Mammary epithelial cell (primary cell): ENCODE measurements at regions of chr16 and their contacts with region 1.

Region 1: DNA sequence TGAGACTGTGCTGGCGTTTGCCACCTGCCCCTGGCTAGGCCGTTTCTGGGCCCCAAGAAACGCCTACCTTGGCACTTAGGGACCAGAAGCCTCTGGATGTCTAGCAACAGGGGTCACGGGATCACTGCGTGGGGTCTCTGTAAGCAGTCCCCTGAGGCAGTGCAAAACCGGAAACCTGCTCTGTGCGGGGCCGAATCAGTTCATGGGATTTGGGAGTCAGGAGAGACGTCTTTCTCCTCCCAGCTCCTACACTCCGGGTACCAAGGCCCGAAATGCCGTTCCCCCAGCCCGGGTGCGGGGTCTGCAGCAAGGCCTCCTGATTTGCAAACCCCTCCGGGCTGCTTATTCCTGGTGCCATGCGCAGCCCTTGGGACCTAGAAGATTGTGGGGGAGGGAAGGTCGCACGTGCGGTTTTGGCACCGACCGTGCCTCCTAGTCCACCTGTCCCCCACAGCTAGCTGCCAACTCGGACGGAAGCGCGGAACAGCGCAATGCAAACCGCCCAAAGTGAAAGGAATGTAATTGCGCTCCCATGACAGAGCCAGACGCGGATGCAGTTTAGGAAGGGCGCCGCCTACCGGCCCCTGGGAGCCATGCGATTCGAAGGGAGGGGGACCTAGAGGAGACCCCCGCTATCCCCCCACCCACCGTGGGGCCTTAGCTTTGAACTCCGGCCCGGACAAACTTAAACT is 6.5 kb downstream of the IRX5 start:
- DNase-seq: peak; percentile 82
- H3K4me3 ChIP-seq: peak overlapping the region; percentile 64 to 95 (median 72)
- H3K27ac ChIP-seq: peak overlapping the region; percentile 90
- H3K4me1 ChIP-seq: peaks cover 29% of the 10 kb centered on the region
- H3K27me3 ChIP-seq: no peaks in the 10 kb centered on the region
- CTCF ChIP-seq: peak; percentile 79 to 88

Region 2: GRCh38 chr16:53892155-53892554 is 1045.0 kb before region 1 on chr16:
- CTCF ChIA-PET with region 1: no interaction called
- dilution Hi-C with region 1: no loop called
- in situ Hi-C with region 1: loop called in 1 of 2 experiments (anchors 25 kb)
- intact Hi-C with region 1: loop called (anchors 2 kb)
- DNase-seq: peak; percentile 51
- H3K4me3 ChIP-seq: no peak overlapping the region
- H3K27ac ChIP-seq: peak overlapping the region; percentile 5
- H3K4me1 ChIP-seq: peaks cover 26% of the 10 kb centered on the region
- H3K27me3 ChIP-seq: no peaks in the 10 kb centered on the region
- CTCF ChIP-seq: peak; percentile 53 to 69

Region 3: DNA sequence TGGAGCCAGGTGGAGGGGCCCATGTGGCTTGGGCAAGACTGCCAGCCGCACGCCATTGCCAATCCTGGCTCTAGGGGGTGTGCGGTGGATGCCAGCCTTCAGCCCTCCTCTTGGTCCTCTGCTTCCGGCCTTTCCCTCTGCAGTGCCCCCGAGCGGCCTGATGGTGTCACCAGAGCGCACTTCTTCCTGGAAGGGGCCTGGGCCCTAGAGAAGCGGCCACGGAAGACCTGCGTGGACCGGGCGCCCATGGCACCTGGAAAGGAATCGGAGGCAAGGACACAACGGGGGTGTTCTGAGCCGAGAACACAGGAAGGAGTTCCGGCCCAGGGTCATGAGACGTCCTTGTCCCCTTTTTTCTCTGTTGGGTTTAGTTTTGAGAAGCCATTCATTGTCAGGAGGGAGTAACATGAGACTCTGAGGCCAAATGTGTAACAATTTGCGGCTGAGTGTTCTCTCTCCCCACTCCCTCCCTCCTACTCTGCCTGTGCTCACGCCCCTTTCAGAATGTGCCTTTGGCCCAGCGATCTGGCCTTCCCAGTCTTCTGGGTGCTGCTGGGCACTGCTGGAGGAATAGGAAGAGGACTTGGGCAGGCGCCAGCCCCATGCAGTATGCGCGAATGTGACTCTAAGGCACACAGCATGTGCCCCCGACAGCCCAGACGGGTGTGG is 743.3 kb before region 1 on chr16:
- CTCF ChIA-PET with region 1: no interaction called
- dilution Hi-C with region 1: no loop called
- in situ Hi-C with region 1: no loop called
- intact Hi-C with region 1: loop called (anchors 5 kb)
- DNase-seq: peak; percentile 58
- H3K4me3 ChIP-seq: no peak overlapping the region
- H3K27ac ChIP-seq: no peak overlapping the region
- H3K4me1 ChIP-seq: peaks cover 12% of the 10 kb centered on the region
- H3K27me3 ChIP-seq: no peaks in the 10 kb centered on the region
- CTCF ChIP-seq: peak; percentile 84 to 93

Region 4: DNA sequence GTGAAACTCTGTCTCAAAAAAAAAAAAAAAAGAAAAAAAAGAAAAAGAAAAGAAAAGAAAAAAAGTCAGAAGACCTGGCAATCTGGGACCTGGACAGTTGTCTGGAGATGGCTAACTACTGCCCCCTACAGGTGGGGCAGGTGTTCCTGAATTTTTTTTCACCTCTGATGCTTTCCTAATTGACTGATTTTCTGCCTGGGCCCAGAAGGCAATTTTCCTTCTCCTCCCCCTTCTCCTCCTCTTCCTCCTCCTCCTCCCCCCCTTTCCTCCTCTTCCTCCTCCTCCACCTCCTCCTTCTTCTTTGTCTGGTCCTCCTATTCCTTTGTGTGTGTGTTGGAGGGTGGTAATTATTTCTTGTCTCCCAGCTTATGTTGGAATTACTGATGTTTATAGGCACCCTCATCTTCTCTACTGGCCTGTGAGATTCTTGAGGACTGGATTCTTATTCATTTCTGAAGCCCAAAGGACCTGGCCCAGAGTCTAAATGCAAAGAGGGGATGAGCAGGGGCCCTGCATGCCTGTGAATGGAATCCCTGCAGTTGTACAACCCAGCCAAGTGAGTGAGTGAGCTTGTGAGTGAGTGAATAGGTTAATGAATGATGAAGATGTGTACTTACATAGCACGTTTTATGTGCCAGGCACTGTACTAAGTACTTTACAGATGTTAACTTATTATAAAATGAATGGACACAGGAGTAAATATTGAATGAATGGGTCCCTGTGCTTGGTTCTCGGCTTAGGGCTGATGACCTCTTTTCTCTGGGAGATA is 20.5 kb after region 1 on chr16:
- CTCF ChIA-PET with region 1: no interaction called
- dilution Hi-C with region 1: no loop called
- in situ Hi-C with region 1: no loop called
- intact Hi-C with region 1: loop called (anchors 1 kb)
- DNase-seq: peak; percentile 43
- H3K4me3 ChIP-seq: no peak overlapping the region
- H3K27ac ChIP-seq: no peak overlapping the region
- H3K4me1 ChIP-seq: no peaks in the 10 kb centered on the region
- H3K27me3 ChIP-seq: no peaks in the 10 kb centered on the region
- CTCF ChIP-seq: peak; percentile 68 to 82

Region 5: DNA sequence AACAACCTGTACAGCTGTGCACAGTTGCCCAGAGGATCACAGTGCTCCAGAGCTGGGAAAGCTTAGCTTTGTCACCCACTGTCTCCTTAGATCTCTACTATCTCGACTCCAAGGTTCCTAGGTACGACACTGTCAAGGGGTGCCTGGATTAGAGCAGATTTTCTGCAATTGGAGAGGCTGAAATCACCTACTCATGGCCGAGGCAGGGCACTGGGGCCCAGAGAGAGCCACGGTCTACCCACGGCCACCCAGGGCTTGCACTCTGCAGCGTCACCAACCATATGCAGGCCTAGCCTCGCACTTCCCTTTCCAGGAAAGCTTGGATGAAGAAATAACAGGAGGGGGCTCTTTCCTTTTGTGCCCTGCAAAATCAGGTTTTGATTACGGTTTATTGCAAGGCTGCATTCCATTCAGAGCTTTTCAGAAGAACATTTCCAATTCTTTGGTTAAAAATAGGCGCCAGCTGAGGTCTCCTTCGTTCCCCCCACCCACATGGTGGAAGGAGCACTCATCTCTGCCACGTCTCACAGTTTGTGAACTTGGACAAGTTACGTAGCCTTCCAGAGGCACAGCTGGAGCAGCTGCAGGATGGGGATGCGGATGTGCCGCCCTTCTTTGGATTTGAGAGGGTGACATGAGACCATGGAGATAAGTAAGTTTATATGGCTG is 73.5 kb after region 1 on chr16:
- CTCF ChIA-PET with region 1: no interaction called
- dilution Hi-C with region 1: loop called (anchors 10 kb)
- in situ Hi-C with region 1: no loop called
- intact Hi-C with region 1: no loop called
- DNase-seq: no peak
- H3K4me3 ChIP-seq: no peak overlapping the region
- H3K27ac ChIP-seq: no peak overlapping the region
- H3K4me1 ChIP-seq: no peaks in the 10 kb centered on the region
- H3K27me3 ChIP-seq: no peaks in the 10 kb centered on the region
- CTCF ChIP-seq: no peak

Region 6: DNA sequence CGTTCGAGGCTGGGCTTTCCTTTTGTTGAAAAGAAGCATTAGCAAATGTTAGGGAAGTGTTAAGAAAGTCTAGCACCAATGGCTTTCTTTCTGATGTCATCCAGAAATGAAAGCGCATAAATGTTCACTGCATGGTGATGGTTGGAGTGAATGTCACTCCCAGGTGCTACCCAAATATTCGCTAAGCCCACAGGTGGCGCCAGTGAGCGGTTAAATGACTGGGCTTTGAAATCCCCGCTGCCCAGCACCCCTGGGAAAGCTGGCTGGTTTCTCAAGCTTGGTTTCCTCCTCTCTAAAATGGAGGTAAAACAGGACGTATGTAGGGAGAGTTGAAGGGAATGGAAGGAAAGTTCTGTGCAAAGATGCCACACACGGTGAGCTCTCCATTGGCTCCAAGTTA is 97.9 kb after region 1 on chr16:
- CTCF ChIA-PET with region 1: no interaction called
- dilution Hi-C with region 1: no loop called
- in situ Hi-C with region 1: no loop called
- intact Hi-C with region 1: loop called (anchors 5 kb)
- DNase-seq: peak; percentile 25
- H3K4me3 ChIP-seq: no peak overlapping the region
- H3K27ac ChIP-seq: no peak overlapping the region
- H3K4me1 ChIP-seq: peaks cover 12% of the 10 kb centered on the region
- H3K27me3 ChIP-seq: peaks cover 4% of the 10 kb centered on the region
- CTCF ChIP-seq: peak; percentile 47 to 63